GM12878 (cell line): ENCODE measurements at regions of chr16 and their contacts with region 1.

Region 1: DNA sequence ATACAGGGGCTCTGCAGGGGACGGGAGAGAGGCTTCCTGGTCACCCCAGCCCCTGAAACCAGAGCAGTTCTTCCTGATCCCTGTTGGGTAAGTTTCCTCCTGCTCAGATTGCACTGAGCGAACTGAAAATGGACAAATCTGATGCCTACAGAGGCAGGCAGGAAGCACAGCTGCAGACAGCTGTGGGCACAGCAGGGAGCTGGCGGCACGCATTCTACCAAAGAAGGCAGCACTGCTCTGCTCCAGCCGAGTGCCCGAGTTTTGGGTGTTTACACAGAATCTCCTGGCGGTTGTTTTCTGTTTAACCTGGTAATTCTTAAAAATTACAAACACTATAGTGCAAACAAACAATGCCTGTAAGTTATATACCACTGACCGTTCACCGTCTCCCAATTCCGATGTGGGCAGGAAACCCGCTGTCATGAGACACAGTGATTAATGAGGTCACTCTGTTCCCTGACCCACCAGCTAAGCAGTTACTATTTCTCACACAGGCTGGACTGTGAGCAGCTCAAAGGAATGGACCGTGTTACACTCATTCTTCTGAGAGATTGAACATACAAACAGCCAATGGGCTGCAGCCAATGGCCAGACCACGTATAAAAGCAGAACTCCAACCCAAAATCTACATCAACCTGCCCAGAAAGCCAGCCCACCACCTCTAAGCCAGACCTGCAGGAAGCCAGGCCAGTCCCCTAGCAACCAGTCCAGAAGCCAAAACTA is 25.5 kb downstream of the NSMCE1 start:
- DNase-seq: peak; percentile 71
- ATAC-seq: peak; percentile 91
- H3K4me3 ChIP-seq: peak overlapping the region; percentile 30; the same call in 1 of the 2 replicates
- H3K27ac ChIP-seq: peak overlapping the region; percentile 47
- H3K4me1 ChIP-seq: peaks cover 20% of the 10 kb centered on the region
- H3K27me3 ChIP-seq: no peaks in the 10 kb centered on the region
- CTCF ChIP-seq: no peak
- EP300 ChIP-seq: peak in 1 of 2 experiments; percentile 72; a peak in 2 of 4 replicates
- POLR2A ChIP-seq: no peak
- RAD21 ChIP-seq: no peak

Region 2: DNA sequence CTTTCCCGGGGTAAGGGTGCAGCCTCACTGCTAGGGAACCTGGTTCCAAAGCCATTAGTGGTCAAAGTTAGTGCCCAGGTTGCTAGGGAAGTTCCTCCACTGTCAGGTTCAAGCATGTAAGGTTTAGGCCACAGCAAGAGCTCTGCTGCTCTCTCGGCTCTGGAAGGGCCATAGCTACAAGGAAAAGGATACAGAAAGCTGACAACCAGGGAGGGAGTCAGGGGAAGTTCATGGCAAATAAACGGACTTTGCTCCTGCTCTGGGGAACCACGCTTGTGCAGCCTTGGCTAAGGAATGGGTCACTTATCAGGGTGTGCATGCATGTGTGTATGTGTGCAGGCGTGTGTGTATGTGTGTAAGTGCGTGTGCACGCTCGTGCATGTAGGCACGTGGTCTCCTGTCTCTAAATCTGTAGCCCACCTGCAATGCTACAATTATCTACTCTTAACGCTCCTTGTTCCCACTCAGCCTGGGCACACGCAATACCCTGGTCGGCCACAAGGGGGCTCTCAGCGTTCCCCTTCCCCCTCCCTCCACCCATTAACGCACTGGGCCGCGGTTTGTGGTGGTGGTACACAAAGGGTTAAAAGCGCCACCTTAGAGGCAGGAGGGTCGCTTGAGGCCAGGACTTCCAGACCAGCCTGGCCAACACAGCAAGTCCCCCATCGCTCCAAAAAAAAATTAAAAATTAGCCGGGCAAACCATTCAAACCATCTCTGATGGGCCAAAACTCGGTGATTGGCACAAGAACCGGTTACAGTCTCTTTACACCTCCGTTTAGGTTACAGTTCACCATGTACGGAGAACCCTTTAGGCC is 88.1 kb before region 1 on chr16:
- CTCF ChIA-PET with region 1: no interaction called
- POLR2A ChIA-PET with region 1: no interaction called
- RAD21 ChIA-PET with region 1: no interaction called
- SMC1A ChIA-PET with region 1: no interaction called
- in situ Hi-C with region 1: no loop called
- intact Hi-C with region 1: no loop called
- DNase-seq: no peak
- ATAC-seq: peak; percentile 94
- H3K4me3 ChIP-seq: no peak overlapping the region
- H3K27ac ChIP-seq: no peak overlapping the region
- H3K4me1 ChIP-seq: peaks cover 3% of the 10 kb centered on the region
- H3K27me3 ChIP-seq: no peaks in the 10 kb centered on the region
- CTCF ChIP-seq: peak; percentile 84 to 99 (median 99)
- EP300 ChIP-seq: no peak
- POLR2A ChIP-seq: no peak
- RAD21 ChIP-seq: peak; percentile 72

Region 3: DNA sequence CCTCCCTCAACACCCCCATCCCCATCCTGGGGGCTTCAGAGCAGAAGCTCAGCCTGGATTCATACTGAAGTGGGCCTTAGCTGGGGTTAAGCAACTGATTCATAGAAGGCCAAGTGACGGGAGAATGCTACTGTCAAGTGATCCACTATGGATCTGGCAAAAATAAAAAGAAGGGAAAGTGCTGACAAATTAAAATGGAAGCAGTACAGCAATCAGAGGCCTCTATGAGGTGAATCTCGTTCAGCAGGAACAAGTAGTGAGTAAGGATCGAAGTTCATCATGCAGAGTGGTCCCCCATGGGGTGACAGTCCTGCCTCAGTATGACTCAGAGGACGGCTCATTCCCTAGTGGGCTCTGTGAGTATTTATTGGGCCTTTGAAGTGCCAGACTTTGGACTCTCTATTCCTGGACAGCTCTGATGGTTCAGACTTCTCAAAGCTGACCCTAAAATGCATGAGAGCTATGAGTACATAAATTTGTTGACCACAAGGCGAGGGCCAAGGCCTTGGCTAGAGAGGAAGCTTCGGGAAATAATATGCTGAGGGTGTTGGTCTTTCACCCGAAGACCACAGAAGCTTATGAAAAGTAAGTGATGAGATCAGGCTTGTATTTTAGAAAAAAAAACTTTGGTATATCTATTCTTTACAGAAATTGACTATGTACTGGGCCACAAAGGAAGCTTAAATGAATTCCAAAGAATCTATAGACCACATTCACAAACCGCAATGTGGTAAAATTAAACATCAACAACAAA is 30.8 kb after region 1 on chr16:
- CTCF ChIA-PET with region 1: interaction called, 121 read pairs
- POLR2A ChIA-PET with region 1: interaction called, 34 read pairs
- RAD21 ChIA-PET with region 1: interaction called, 105 read pairs
- SMC1A ChIA-PET with region 1: interaction called, 178 read pairs
- in situ Hi-C with region 1: no loop called
- intact Hi-C with region 1: no loop called
- DNase-seq: no peak
- ATAC-seq: peak; percentile 82
- H3K4me3 ChIP-seq: no peak overlapping the region
- H3K27ac ChIP-seq: no peak overlapping the region
- H3K4me1 ChIP-seq: peaks cover 16% of the 10 kb centered on the region
- H3K27me3 ChIP-seq: no peaks in the 10 kb centered on the region
- CTCF ChIP-seq: no peak
- EP300 ChIP-seq: 0 out of 4 replicates have a peak, but pooled peaks of 1 of the 2 experiments have one; percentile 17
- POLR2A ChIP-seq: no peak
- RAD21 ChIP-seq: no peak

Region 4: DNA sequence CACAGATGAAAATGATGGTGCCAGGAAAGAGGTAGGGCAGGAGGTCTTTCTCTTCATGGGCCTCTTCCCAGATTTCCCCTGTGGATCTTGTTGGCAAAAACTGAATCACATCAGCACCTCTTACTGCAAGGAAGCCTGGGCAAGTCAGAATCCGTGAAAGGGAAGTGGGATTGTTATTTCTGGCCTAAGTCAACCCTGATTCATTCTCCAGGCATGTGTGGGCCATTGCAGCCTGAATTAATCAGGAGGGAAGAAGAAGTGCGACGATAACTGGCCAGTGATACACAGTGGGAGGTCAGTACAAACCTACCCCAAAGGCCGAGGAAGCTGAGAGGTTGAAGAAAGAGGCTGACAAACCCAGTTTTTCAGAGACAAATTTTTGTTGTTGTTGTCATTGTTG is 43.4 kb after region 1 on chr16:
- CTCF ChIA-PET with region 1: interaction called, 3 read pairs
- POLR2A ChIA-PET with region 1: interaction called, 4 read pairs
- RAD21 ChIA-PET with region 1: interaction called, 16 read pairs
- SMC1A ChIA-PET with region 1: interaction called, 65 read pairs
- in situ Hi-C with region 1: no loop called
- intact Hi-C with region 1: no loop called
- DNase-seq: no peak
- ATAC-seq: no peak
- H3K4me3 ChIP-seq: no peak overlapping the region
- H3K27ac ChIP-seq: no peak overlapping the region
- H3K4me1 ChIP-seq: peaks cover 40% of the 10 kb centered on the region
- H3K27me3 ChIP-seq: 0 out of 4 replicates have a peak, but pooled peaks cover 0 to 3% of the 10 kb centered on the region in 2 experiments
- CTCF ChIP-seq: no peak
- EP300 ChIP-seq: no peak
- POLR2A ChIP-seq: no peak
- RAD21 ChIP-seq: no peak